Transverse colon (tissue), 4 donors: ENCODE measurements at regions of chr4 and their contacts with region 1.

Region 1: GRCh38 chr4:17544205-17544604 is 29.2 kb downstream of the CLRN2 start:
- DNase-seq: peak; percentile 17
- H3K4me3 ChIP-seq: no peak overlapping the region
- H3K27ac ChIP-seq: no peak overlapping the region
- H3K4me1 ChIP-seq: peaks cover 0 to 4% (median 0%) of the 10 kb centered on the region in 4 donors
- H3K27me3 ChIP-seq: no peaks in the 10 kb centered on the region
- CTCF ChIP-seq: no peak
- EP300 ChIP-seq: no peak
- POLR2A ChIP-seq: no peak

Region 2: DNA sequence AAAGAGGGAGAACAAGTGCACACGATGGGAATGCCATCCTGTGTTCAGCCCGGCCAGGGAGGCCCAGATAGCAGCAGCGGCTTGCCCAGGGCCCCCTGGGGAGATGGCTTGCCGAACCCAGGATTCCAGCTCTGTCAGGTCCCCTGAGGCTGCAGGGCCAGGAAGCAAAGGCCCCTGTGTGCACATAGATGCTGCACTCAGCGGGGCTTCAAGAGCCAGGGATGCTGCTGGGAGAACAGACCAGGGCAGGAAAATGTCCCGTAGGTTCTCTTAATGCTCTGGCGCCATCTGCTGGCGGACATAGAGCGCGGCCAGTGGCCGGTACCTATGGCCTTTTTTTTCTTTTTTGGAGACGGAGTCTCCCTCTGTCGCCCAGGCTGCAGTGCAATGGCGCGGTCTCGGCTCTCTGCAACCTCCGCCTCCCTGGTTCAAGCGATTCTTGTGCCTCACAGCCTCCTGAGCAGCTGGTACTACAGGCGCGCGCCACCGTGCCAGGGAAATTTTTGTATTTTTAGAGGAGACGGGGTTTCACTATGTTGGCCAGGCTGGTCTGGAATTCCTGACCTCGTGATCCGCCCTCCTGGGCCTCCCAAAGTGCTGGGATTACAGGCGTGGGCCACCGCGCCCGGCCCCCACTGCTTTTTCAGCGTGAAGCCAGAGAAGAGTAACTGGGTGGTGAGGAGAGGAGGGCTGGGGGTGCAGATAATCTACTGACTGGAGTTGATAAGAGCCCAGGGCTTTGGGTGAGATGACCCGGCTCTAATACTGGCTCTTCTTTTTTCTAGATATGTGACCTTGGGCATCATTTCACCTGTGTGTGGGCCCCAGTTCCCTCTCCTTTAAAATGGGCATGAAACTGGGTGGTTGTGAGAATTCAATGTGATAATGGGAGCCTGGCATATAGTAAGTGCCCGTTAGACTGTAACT is 92.8 kb after region 1 on chr4:
- in situ Hi-C with region 1: no loop called
- intact Hi-C with region 1: loop called (anchors 5 kb)
- DNase-seq: peak; percentile 77
- H3K4me3 ChIP-seq: no peak overlapping the region
- H3K27ac ChIP-seq: no peak overlapping the region
- H3K4me1 ChIP-seq: no peaks in the 10 kb centered on the region
- H3K27me3 ChIP-seq: no peaks in the 10 kb centered on the region
- CTCF ChIP-seq: peak; percentile 75 to 93 (median 90)
- EP300 ChIP-seq: no peak
- POLR2A ChIP-seq: no peak

Region 3: GRCh38 chr4:17680559-17681280 is 136.5 kb after region 1 on chr4:
- in situ Hi-C with region 1: no loop called
- intact Hi-C with region 1: no loop called
- DNase-seq: no peak
- H3K4me3 ChIP-seq: no peak overlapping the region
- H3K27ac ChIP-seq: no peak overlapping the region
- H3K4me1 ChIP-seq: no peaks in the 10 kb centered on the region
- H3K27me3 ChIP-seq: no peaks in the 10 kb centered on the region
- CTCF ChIP-seq: no peak
- EP300 ChIP-seq: no peak
- POLR2A ChIP-seq: no peak